Dendritic cell treated with granulocyte-macrophage colony-stimulating factor and Interleukin-4, amounts not matched to agents 40 ng/mL and 50 ng/mL, for 4 days (primary cell): ENCODE measurements at regions of chrX and their contacts with region 1.

Region 1: DNA sequence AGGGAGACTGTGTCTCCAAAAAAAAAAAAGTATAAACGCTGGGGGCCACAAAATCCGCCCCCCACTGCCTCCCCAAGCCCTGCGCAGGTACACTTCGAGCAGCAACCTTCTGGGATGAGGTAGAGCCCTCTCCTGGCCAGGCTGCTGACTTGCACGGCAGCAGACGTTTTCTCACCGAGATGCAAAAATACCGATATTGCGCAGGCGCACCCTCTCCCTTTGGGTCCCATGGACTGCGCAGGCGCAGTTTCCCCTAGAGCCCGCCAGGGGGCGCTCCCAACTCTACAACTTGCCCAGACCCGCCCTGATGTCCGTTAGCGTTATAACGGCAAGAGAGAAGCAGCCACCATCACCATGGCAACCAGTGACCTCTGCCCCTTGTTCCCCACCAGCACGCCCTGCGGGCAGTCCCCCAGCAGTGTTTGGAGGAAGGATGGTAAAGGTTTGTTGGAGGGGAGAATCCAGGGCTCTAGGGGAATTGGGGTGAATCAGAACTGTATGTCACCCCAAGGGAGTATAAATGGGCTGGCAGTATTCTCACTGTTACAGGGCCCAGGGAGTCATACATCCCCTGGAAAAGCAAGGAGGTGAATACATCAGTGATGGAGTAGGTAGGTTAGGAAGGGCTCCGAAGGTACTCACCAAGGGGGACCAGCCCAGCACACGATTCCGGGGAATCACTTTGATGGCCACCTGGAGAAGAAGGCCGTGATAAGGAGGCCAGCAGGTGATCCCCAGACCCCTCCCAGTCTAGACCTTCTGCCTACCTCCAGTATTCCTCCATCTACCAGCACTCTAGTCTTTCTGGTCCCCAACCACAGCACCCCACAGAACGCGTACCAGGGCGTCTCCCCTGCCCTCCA is 1.5 kb downstream of the PIM2 start:
- H3K4me3 Mint-ChIP-seq: peak overlapping the region; percentile 90
- H3K27ac Mint-ChIP-seq: peak overlapping the region; percentile 92
- H3K4me1 Mint-ChIP-seq: peaks cover 54% of the 10 kb centered on the region
- H3K27me3 Mint-ChIP-seq: no peaks in the 10 kb centered on the region

Region 2: DNA sequence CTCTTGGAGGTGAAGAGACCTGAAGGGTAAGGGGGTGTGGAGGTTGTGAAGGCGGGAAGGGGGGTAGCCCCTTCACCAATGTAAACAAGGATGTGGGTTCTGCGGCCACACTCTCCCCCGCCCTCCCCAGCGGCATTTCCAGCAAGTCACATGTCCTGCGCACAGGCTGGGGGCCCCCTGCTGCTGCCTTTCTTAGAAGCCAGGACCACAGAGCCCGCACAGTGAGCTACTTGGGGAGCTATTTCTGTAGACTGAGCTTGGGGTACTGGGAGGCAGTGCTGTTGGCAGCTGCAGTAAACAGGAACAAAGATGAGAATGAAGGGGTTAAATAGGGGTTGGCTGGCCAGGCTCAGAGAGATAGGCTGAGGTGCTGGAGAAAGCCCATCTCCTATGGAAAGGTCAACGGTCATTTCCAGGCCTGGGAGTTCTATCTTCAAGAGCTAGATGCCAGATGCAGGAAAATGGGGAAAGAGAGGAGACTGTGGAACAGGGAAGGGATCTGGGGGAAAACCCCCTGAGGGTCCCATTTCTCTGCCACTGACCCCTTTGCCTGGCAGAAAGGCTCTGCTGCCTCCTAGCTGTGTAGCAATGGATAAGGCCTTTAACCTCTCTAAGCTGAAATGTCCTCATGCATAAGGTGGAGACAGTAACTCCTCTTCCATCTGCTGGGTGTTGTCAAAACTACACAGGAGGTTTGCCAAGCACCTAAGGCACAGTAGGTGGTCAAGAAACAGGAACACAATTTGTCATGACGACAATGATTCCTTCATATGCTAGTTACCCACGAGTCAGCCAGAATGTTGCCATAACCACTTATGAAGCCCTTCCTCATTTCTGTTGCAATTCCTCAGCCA is 19.9 kb after region 1 on chrX:
- intact Hi-C with region 1: loop called (anchors 2 kb)
- H3K4me3 Mint-ChIP-seq: peak overlapping the region; percentile 51
- H3K27ac Mint-ChIP-seq: peak overlapping the region; percentile 88
- H3K4me1 Mint-ChIP-seq: peaks cover 69% of the 10 kb centered on the region
- H3K27me3 Mint-ChIP-seq: no peaks in the 10 kb centered on the region